Right ventricle myocardium inferior (tissue), 1 donor: ENCODE measurements at regions of chr16 and their contacts with region 1.

Region 1: DNA sequence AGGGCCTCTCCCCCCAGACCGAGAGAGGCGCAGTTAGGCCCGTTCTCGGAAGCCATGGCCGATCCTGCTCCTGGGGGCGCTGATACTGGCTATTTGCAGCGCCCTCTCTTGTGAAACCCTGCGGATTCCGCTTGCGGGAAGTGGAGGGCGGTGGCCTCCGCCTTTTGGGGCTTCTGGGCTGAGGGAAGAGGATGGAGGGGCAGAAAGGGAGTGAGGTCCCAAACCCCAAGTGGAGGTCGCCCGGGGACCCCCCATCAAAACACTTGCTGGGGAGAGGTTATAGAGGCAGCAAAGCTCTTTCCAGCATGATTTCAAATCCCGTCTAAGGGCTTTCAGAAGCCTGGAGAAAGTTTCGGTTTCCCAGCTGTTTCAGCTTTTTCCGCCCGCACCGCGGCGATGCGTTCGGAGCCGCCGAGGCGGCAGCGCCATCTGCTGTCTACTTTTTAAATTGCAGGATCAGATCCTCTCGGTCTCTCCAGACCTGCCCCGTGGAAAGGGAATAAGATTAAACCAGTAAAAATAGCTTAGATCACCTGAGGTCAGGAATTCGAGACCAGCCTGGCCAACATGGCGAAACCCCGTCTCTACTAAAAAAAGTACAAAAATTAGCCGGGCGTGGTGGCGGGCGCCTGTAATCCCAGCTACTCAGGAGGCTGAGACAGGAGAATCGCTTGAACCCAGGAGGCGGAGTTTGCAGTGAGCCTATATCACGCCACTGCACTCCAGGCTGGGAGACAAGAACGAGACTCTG is 15.8 kb downstream of the SNX20 start:
- DNase-seq: peak; percentile 88
- ATAC-seq: peak; percentile 86

Region 2: GRCh38 chr16:50603206-50604064 is 61.9 kb before region 1 on chr16:
- intact Hi-C with region 1: no loop called
- DNase-seq: peak; percentile 71
- ATAC-seq: peak; percentile 72

Region 3: GRCh38 chr16:50747207-50747956 is 82.1 kb after region 1 on chr16:
- intact Hi-C with region 1: loop called (anchors 5 kb)
- DNase-seq: no peak
- ATAC-seq: peak; percentile 23

Region 4: DNA sequence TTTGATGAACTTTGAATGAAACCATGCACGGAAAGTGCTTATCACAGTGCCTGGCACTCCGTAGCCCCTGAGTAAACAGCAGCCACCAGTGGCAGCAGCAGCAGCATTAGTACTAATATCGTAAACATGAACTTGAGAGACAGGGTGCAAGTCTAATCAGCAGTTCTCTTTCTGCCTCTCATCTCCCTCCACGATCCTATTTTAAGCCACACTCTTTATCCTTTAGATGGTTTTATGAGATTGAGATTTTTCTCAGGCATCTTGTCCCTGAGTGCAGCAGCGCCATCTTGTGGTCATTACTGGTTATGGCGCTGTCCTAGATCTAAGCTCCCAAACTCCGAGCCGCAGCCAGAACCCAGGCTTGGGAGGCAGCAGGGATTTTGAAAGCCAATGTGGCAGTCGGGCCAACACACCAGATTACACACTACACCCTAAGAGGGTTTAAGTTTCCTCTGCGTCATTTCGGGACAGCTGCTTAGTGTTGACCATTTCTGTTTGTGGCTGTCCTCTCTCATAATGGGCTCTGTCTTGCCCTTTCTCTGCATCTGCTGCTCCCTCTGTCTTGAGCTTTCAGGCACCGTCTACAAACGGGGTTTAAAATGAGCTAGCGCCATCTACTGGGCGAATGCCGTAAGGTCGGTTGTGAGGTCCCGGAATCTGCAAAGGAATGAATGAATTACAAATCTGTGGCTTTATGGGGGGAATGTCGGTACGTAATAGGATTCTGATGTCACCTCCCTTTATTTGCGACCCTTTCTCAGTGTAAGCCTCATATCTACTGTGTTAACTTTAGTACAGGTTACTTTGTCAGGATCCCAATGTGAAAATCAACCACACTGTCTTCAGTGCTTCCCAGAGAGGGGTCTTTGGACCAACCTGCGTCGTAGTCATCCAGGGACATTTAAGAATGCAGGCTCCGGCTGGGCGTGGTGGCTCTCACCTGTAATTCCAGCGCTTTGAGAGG is 141.1 kb after region 1 on chr16:
- intact Hi-C with region 1: loop called (anchors 2 kb)
- DNase-seq: peak; percentile 87
- ATAC-seq: peak; percentile 93